Vagina (tissue), 2 donors: ENCODE measurements at regions of chr6 and their contacts with region 1.

Region 1: DNA sequence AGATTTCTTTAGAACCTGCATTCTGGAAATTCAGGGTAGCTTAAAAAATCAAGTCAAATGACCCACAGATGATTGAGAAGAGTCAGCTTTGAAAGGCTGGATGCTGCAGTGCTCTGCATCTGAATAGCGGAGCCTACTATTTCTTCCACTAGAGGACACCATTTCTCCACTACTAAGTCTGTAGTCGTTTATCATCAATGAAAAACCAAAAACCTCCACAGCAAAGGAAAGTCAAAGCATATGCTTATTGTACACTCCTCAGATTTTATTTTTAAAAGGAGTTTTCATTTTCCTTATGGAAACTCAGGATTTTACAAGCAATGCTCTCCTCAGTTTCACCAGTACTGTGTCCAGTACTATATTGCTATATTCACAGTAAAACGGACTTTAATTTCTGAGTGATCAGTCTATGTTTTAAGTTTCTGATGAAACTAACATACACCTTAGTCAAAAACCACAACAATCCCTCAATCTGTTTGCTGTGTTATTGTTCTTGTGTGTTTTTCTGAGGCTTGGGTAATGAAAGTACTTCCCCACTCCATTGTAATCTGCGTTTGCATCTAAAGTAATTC is 50.5 kb upstream of the ENPP5 start:
- DNase-seq: no peak
- H3K4me3 ChIP-seq: no peak overlapping the region
- H3K27ac ChIP-seq: no peak overlapping the region
- H3K4me1 ChIP-seq: no peaks in the 10 kb centered on the region
- H3K27me3 ChIP-seq: no peaks in the 10 kb centered on the region
- CTCF ChIP-seq: peak in 2 of 3 experiments; percentile 62 to 83
- POLR2A ChIP-seq: no peak

Region 2: DNA sequence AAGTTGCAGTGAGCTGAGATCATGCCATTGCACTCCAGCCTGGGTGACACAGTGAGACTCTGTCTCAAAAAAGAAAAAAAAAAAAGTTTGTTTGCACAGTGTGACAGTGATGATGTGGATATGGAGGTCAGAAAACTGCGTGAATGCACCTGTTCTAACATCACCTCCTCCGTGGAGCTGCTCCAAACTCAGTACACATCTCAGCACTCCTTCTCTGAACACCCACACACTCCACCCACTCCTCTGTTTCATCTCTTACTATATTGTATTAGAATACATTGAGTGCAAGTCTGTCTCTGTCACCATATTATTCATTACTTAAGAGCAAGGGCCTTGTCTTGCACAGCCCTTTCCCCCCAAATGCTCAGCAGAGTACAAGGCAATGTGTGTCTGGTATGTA is 143.0 kb before region 1 on chr6:
- intact Hi-C with region 1: no loop called
- DNase-seq: no peak
- H3K4me3 ChIP-seq: no peak overlapping the region
- H3K27ac ChIP-seq: no peak overlapping the region
- H3K4me1 ChIP-seq: no peaks in the 10 kb centered on the region
- H3K27me3 ChIP-seq: no peaks in the 10 kb centered on the region
- CTCF ChIP-seq: no peak
- POLR2A ChIP-seq: no peak

Region 3: GRCh38 chr6:46090115-46091079 is 130.9 kb before region 1 on chr6:
- intact Hi-C with region 1: loop called (anchors 10 kb)
- DNase-seq: no peak
- H3K4me3 ChIP-seq: no peak overlapping the region
- H3K27ac ChIP-seq: no peak overlapping the region
- H3K4me1 ChIP-seq: no peaks in the 10 kb centered on the region
- H3K27me3 ChIP-seq: no peaks in the 10 kb centered on the region
- CTCF ChIP-seq: peak; percentile 31 to 65 (median 58)
- POLR2A ChIP-seq: no peak

Region 4: GRCh38 chr6:46312654-46313053 is 91.3 kb after region 1 on chr6:
- intact Hi-C with region 1: no loop called
- DNase-seq: no peak
- H3K4me3 ChIP-seq: no peak overlapping the region
- H3K27ac ChIP-seq: no peak overlapping the region
- H3K4me1 ChIP-seq: no peaks in the 10 kb centered on the region
- H3K27me3 ChIP-seq: no peaks in the 10 kb centered on the region
- CTCF ChIP-seq: no peak
- POLR2A ChIP-seq: no peak

Region 5: GRCh38 chr6:46410334-46410953 is 189.1 kb after region 1 on chr6:
- intact Hi-C with region 1: loop called (anchors 5 kb)
- DNase-seq: no peak
- H3K4me3 ChIP-seq: no peak overlapping the region
- H3K27ac ChIP-seq: peak overlapping the region; percentile 28
- H3K4me1 ChIP-seq: peaks cover 9% of the 10 kb centered on the region
- H3K27me3 ChIP-seq: no peaks in the 10 kb centered on the region
- CTCF ChIP-seq: peak; percentile 50 to 75 (median 58)
- POLR2A ChIP-seq: no peak

Region 6: DNA sequence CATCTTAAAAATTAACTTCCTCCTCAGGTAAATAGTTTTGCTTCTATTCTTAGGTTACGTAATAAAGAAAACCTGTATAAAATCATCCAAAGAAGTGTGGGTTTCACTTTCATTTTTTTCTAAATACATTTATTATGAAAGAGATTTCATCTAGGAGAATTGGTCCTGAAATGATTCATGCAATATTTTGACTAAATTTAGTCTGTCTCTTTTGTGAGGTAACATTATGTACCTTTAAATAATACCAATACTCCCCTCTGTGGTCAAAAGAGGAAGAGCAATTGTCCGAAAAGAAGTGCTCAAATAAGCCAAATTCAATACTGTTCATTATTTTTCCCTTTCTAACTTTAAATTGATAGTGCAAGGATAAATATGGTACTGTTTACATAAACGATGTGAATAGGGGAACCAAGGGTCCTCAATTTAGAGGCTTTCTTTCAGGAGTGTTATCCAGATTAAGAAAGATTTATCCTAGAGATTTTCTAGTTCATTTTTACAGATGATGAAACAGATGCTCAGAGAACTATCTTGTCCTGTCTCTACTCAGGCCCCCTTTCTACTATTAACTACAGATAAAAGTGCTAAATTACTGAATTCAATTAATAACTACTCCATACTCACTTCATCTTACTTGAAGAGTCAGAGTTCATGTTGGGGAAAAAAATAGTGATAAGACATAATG is 405.1 kb after region 1 on chr6:
- intact Hi-C with region 1: loop called (anchors 10 kb)
- DNase-seq: no peak
- H3K4me3 ChIP-seq: no peak overlapping the region
- H3K27ac ChIP-seq: peak overlapping the region; percentile 46
- H3K4me1 ChIP-seq: no peaks in the 10 kb centered on the region
- H3K27me3 ChIP-seq: no peaks in the 10 kb centered on the region
- CTCF ChIP-seq: peak in 2 of 3 experiments; percentile 61 to 76
- POLR2A ChIP-seq: no peak